HepG2 (cell line): ENCODE measurements at regions of chr2 and their contacts with region 1.

Region 1: GRCh38 chr2:2291500-2292260 is 39.4 kb downstream of the MYT1L start:
- DNase-seq: no peak
- ATAC-seq: peak; percentile 94
- H3K4me3 ChIP-seq: no peak overlapping the region
- H3K27ac ChIP-seq: no peak overlapping the region
- H3K4me1 ChIP-seq: no peaks in the 10 kb centered on the region
- H3K27me3 ChIP-seq: peaks cover 2 to 45% of the 10 kb centered on the region in 2 experiments; a peak in 4 of 5 replicates
- CTCF ChIP-seq: peak; percentile 71
- EP300 ChIP-seq: no peak
- POLR2A ChIP-seq: no peak
- RAD21 ChIP-seq: peak; percentile 51; the same call in 1 of the 2 replicates

Region 2: GRCh38 chr2:2057125-2057721 is 234.5 kb before region 1 on chr2:
- CTCF ChIA-PET with region 1: no interaction called
- POLR2A ChIA-PET with region 1: no interaction called
- in situ Hi-C with region 1: no loop called
- intact Hi-C with region 1: no loop called
- DNase-seq: no peak
- ATAC-seq: no peak
- H3K4me3 ChIP-seq: no peak overlapping the region
- H3K27ac ChIP-seq: no peak overlapping the region
- H3K4me1 ChIP-seq: no peaks in the 10 kb centered on the region
- H3K27me3 ChIP-seq: no peaks in the 10 kb centered on the region
- CTCF ChIP-seq: no peak
- EP300 ChIP-seq: no peak
- POLR2A ChIP-seq: no peak
- RAD21 ChIP-seq: no peak

Region 3: GRCh38 chr2:2116657-2117056 is 175.0 kb before region 1 on chr2:
- CTCF ChIA-PET with region 1: interaction called, 4 read pairs
- POLR2A ChIA-PET with region 1: no interaction called
- in situ Hi-C with region 1: no loop called
- intact Hi-C with region 1: loop called (anchors 1 kb)
- DNase-seq: no peak
- ATAC-seq: no peak
- H3K4me3 ChIP-seq: no peak overlapping the region
- H3K27ac ChIP-seq: no peak overlapping the region
- H3K4me1 ChIP-seq: no peaks in the 10 kb centered on the region
- H3K27me3 ChIP-seq: peaks cover 0 to 17% of the 10 kb centered on the region in 2 experiments; a peak in 4 of 5 replicates
- CTCF ChIP-seq: no peak
- EP300 ChIP-seq: no peak
- POLR2A ChIP-seq: no peak
- RAD21 ChIP-seq: no peak

Region 4: GRCh38 chr2:2787301-2787907 is 495.7 kb after region 1 on chr2:
- CTCF ChIA-PET with region 1: no interaction called
- POLR2A ChIA-PET with region 1: no interaction called
- in situ Hi-C with region 1: no loop called
- intact Hi-C with region 1: no loop called
- DNase-seq: no peak
- ATAC-seq: no peak
- H3K4me3 ChIP-seq: no peak overlapping the region
- H3K27ac ChIP-seq: no peak overlapping the region
- H3K4me1 ChIP-seq: no peaks in the 10 kb centered on the region
- H3K27me3 ChIP-seq: peaks cover 6 to 51% of the 10 kb centered on the region in 2 experiments; a peak in 3 of 5 replicates
- CTCF ChIP-seq: no peak
- EP300 ChIP-seq: no peak
- POLR2A ChIP-seq: no peak
- RAD21 ChIP-seq: no peak